H1 (cell line): ENCODE measurements at regions of chr6 and their contacts with region 1.

Region 1: DNA sequence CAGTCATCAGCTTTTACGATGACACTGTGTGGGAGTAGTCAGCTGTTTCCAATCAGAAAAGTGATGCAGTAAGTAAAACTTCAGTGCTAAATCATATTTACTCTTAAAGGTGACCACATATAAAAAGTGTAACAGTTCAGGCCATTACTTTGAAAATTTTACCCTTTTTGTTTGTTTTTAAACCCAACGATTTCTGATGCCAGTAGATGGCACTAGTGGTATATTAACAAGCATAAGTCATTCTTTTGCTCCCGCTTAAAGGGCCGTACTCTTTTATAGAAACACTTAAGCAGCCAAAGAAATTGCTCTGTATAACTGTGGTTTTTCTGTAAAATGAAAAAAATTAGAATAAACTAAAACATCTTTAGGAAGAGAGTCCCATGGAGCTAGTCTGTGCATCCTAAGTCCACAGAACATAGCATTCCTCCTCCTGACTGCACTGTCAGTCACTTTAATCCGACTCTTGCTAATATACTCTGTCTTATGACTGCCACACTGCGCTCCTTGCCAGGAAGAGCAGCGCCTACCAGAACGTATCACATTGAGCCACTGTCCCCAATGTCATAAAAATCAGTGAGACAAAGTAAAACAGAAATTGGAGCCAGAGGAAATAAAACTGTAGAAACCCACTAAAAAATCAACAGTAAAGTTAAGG is 25.0 kb downstream of the HEBP2 start:
- DNase-seq: no peak
- H3K4me3 ChIP-seq: no peak overlapping the region
- H3K27ac ChIP-seq: no peak overlapping the region
- H3K4me1 ChIP-seq: no peaks in the 10 kb centered on the region; a peak in 2 of 7 replicates
- H3K27me3 ChIP-seq: no peaks in the 10 kb centered on the region
- CTCF ChIP-seq: peak in 2 of 3 experiments; percentile 41 to 47; a peak in 2 of 4 replicates
- EP300 ChIP-seq: no peak
- POLR2A ChIP-seq: no peak
- RAD21 ChIP-seq: peak; percentile 74 to 75

Region 2: GRCh38 chr6:138307816-138308728 is 121.0 kb before region 1 on chr6:
- CTCF ChIA-PET with region 1: no interaction called
- POLR2A ChIA-PET with region 1: no interaction called
- DNase-seq: no peak
- H3K4me3 ChIP-seq: no peak overlapping the region
- H3K27ac ChIP-seq: no peak overlapping the region
- H3K4me1 ChIP-seq: no peaks in the 10 kb centered on the region
- H3K27me3 ChIP-seq: no peaks in the 10 kb centered on the region
- CTCF ChIP-seq: no peak
- EP300 ChIP-seq: no peak
- POLR2A ChIP-seq: no peak
- RAD21 ChIP-seq: no peak

Region 3: GRCh38 chr6:138440758-138441357 is 11.8 kb after region 1 on chr6:
- CTCF ChIA-PET with region 1: interaction called, 35 read pairs
- POLR2A ChIA-PET with region 1: no interaction called
- DNase-seq: no peak
- H3K4me3 ChIP-seq: no peak overlapping the region
- H3K27ac ChIP-seq: no peak overlapping the region
- H3K4me1 ChIP-seq: no peaks in the 10 kb centered on the region
- H3K27me3 ChIP-seq: no peaks in the 10 kb centered on the region
- CTCF ChIP-seq: no peak
- EP300 ChIP-seq: no peak
- POLR2A ChIP-seq: no peak
- RAD21 ChIP-seq: no peak

Region 4: GRCh38 chr6:138450445-138450844 is 21.4 kb after region 1 on chr6:
- CTCF ChIA-PET with region 1: interaction called, 35 read pairs
- POLR2A ChIA-PET with region 1: no interaction called
- DNase-seq: no peak
- H3K4me3 ChIP-seq: no peak overlapping the region
- H3K27ac ChIP-seq: no peak overlapping the region
- H3K4me1 ChIP-seq: peaks cover 0 to 3% (median 0%) of the 10 kb centered on the region in 4 experiments; a peak in 2 of 7 replicates
- H3K27me3 ChIP-seq: no peaks in the 10 kb centered on the region
- CTCF ChIP-seq: no peak
- EP300 ChIP-seq: no peak
- POLR2A ChIP-seq: no peak
- RAD21 ChIP-seq: no peak

Region 5: DNA sequence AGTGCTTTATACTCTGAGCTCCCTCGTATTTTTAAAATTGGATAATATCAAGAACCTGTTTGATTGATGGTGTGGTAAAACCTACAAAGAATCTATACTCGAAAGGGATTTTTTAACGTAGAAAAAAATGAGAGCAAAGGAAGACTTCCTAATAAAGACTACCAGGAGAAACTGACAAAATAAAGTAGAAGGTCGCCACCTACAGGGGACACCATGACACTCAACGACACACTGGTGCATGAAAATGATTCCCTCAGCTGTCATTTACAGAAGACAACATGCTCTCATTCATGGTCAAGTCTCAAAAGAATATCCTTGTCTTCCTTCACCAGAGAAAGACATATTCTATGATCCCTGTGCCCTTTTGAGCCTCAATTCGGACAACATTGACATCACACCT is 80.3 kb after region 1 on chr6:
- CTCF ChIA-PET with region 1: interaction called, 192 read pairs
- POLR2A ChIA-PET with region 1: no interaction called
- DNase-seq: no peak
- H3K4me3 ChIP-seq: no peak overlapping the region
- H3K27ac ChIP-seq: no peak overlapping the region
- H3K4me1 ChIP-seq: peaks cover 0 to 7% (median 2%) of the 10 kb centered on the region in 4 experiments; a peak in 3 of 7 replicates
- H3K27me3 ChIP-seq: peaks cover 0 to 1% (median 0%) of the 10 kb centered on the region in 4 experiments; a peak in 1 of 7 replicates
- CTCF ChIP-seq: peak; percentile 30 to 78 (median 50)
- EP300 ChIP-seq: no peak
- POLR2A ChIP-seq: no peak
- RAD21 ChIP-seq: peak; percentile 83 to 84

Region 6: GRCh38 chr6:138517635-138518034 is 88.6 kb after region 1 on chr6:
- CTCF ChIA-PET with region 1: interaction called, 192 read pairs
- POLR2A ChIA-PET with region 1: no interaction called
- DNase-seq: peak; percentile 39 to 70
- H3K4me3 ChIP-seq: no peak overlapping the region
- H3K27ac ChIP-seq: no peak overlapping the region
- H3K4me1 ChIP-seq: peaks cover 0 to 3% (median under 1%) of the 10 kb centered on the region in 4 experiments; a peak in 3 of 7 replicates
- H3K27me3 ChIP-seq: no peaks in the 10 kb centered on the region
- CTCF ChIP-seq: peak; percentile 74 to 97 (median 93)
- EP300 ChIP-seq: no peak
- POLR2A ChIP-seq: no peak
- RAD21 ChIP-seq: peak; percentile 66 to 75

Region 7: GRCh38 chr6:138523347-138524210 is 94.5 kb after region 1 on chr6:
- CTCF ChIA-PET with region 1: interaction called, 70 read pairs
- POLR2A ChIA-PET with region 1: no interaction called
- DNase-seq: no peak
- H3K4me3 ChIP-seq: no peak overlapping the region
- H3K27ac ChIP-seq: no peak overlapping the region
- H3K4me1 ChIP-seq: peaks cover 1 to 10% (median 4%) of the 10 kb centered on the region in 4 experiments; a peak in 4 of 7 replicates
- H3K27me3 ChIP-seq: no peaks in the 10 kb centered on the region
- CTCF ChIP-seq: no peak
- EP300 ChIP-seq: no peak
- POLR2A ChIP-seq: no peak
- RAD21 ChIP-seq: no peak

Region 8: DNA sequence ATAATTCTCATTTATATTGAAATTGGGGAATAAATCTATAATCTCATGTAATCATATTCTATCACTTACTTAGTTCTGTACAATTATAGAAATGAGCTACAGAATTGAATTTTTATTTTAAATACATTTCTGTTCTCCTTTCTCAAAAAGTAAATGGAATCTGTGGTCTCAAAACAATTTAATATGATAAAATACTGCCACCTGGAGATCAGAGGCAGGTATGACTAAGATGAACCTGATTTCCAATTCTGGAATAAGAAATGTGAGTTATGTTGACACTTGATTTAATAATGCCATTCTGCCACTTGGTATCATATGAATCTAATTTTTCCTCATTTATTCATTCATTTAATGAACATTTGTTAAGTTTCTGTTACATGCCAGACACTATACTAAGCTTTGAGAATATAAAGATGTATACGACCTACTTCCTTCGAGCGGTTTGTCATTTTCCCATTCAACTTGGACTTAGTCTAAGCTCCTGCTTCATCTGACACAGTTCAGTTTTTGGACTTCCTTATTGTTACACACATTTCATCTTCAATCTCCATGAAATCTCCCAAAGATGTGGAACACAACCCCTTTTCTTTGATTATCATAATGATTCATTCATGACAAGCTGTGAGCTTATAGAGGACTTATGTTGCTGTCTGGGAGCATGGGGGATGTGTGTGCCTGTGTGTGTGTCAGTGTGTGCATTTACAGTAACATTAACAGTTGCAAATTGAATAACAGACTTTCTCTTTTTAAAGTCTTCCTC is 337.0 kb after region 1 on chr6:
- CTCF ChIA-PET with region 1: interaction called, 18 read pairs
- POLR2A ChIA-PET with region 1: no interaction called
- DNase-seq: no peak
- H3K4me3 ChIP-seq: no peak overlapping the region
- H3K27ac ChIP-seq: no peak overlapping the region
- H3K4me1 ChIP-seq: no peaks in the 10 kb centered on the region
- H3K27me3 ChIP-seq: no peaks in the 10 kb centered on the region
- CTCF ChIP-seq: peak in 2 of 3 experiments; percentile 25 to 43; a peak in 2 of 4 replicates
- EP300 ChIP-seq: no peak
- POLR2A ChIP-seq: no peak
- RAD21 ChIP-seq: peak; percentile 55 to 68